ENCODE measurements at regions of chr7 and their contacts with region 1.

Region 1: DNA sequence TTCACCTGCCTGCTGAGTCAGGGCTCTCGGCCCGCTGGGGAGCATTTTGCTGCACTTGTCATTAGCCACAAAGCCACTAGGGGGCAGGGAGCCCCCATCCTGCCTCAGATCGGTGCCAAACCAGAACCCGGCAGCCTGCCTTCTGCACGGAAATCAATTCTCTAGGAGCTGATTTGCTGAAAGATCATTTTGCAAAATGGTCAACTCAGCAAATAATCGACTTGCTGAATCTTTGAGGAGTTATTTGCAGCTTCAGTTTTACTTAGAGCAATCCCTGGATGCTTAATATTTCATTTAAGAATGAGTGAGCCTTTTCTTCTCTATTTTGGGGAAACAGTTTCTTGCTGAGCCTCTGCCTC is 1.7 kb upstream of the GIMAP8 start:
- DNase-seq: peak; percentile 94
- ATAC-seq: peak; percentile 60
- H3K4me3 Mint-ChIP-seq: peak overlapping the region; percentile 32
- H3K27ac Mint-ChIP-seq: peak overlapping the region; percentile 98
- H3K4me1 Mint-ChIP-seq: peaks cover 55% of the 10 kb centered on the region
- H3K27me3 Mint-ChIP-seq: no peaks in the 10 kb centered on the region

Region 2: DNA sequence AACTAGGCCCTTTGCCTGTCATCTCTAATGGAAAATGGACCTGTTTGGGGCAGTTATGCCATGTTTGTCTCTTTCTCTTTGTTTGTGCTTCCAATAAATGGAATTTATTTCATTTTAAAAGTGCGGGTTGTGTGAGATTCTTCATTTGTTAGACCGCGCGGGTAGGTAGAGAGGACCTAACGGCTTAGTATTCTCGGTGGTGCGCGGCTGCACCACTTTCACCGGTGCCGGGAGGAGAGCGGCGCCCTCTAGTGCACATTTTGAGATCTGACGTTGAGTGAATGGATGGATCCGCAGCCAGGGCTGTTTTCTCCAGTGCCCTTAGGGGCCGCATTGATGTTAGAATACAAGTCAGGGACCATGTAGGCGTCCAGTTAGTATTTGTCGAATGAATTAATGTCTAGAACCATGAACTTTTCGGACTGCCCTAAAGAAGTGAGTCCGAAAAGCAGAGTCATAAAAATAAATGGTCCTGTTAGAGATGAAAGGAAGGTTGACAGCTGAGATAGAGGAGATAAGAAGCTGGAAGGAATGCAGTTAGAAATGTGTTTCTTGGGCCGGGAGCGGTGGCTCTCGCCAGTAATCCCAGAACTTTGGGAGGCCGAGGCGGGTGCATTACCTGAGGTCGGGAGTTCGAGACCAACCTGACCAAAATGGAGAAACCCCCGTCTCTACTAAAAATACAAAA is 27.6 kb before region 1 on chr7:
- CTCF ChIA-PET with region 1: no interaction called
- DNase-seq: peak; percentile 90
- ATAC-seq: peak; percentile 100
- H3K4me3 Mint-ChIP-seq: peak overlapping the region; percentile 31
- H3K27ac Mint-ChIP-seq: peak overlapping the region; percentile 50
- H3K4me1 Mint-ChIP-seq: peaks cover 11% of the 10 kb centered on the region
- H3K27me3 Mint-ChIP-seq: peaks cover 2% of the 10 kb centered on the region

Region 3: DNA sequence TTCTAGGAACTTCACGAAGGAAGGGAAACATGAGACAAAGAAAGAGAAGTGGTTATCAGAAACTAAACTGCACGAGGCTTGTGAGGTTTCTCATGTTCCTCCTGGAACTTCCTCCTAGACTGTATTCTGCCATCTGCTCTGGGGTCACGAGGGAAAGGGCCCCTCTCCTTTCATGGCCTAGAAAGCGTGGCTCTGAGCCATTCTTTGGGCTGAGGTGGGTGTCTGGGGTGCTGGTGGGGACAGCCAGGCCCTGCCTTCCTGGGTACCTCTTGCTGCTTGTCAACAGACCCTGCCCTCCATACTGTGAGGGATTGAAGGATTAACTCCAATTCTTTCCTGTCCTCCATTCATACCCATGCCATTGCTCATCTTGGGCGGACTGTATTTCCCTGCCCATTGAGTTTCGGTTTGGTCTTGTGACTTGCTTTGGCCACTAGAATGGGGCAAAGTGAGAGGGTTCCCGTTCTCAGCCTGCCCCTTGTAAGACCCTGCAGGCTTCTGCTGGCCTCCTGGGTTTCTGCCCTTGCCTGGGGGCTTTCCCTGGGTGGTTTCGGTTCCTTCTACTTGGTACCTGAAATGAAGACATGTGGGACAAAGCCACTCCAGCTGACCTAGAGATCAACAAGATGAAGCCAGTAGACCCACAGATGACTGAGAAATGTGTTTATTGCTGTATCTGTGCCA is 13.2 kb before region 1 on chr7:
- CTCF ChIA-PET with region 1: interaction called, 10 read pairs
- DNase-seq: peak; percentile 39
- ATAC-seq: no peak
- H3K4me3 Mint-ChIP-seq: no peak overlapping the region
- H3K27ac Mint-ChIP-seq: peak overlapping the region; percentile 17
- H3K4me1 Mint-ChIP-seq: peaks cover 58% of the 10 kb centered on the region
- H3K27me3 Mint-ChIP-seq: peaks cover 2% of the 10 kb centered on the region

Region 4: GRCh38 chr7:150507947-150508602 is 59.3 kb after region 1 on chr7:
- CTCF ChIA-PET with region 1: interaction called, 19 read pairs
- DNase-seq: no peak
- ATAC-seq: peak; percentile 18
- H3K4me3 Mint-ChIP-seq: peak overlapping the region; percentile 36
- H3K27ac Mint-ChIP-seq: peak overlapping the region; percentile 76
- H3K4me1 Mint-ChIP-seq: peaks cover 85% of the 10 kb centered on the region
- H3K27me3 Mint-ChIP-seq: no peaks in the 10 kb centered on the region

Region 5: GRCh38 chr7:150567169-150567568 is 118.4 kb after region 1 on chr7 and contains the start of gene GIMAP4:
- CTCF ChIA-PET with region 1: interaction called, 52 read pairs
- DNase-seq: peak; percentile 58
- ATAC-seq: peak; percentile 68
- H3K4me3 Mint-ChIP-seq: peak within 1 kb of the TSS; percentile 88
- H3K27ac Mint-ChIP-seq: peak within 1 kb of the TSS; percentile 96
- H3K4me1 Mint-ChIP-seq: peaks cover 70% of the 10 kb centered on the region
- H3K27me3 Mint-ChIP-seq: no peaks in the 10 kb centered on the region
- total RNA-seq, gene GIMAP4: 60.5 to 145 TPM

Region 6: GRCh38 chr7:150631866-150632864 is 183.4 kb after region 1 on chr7 and contains the start of gene GIMAP6:
- CTCF ChIA-PET with region 1: interaction called, 13 read pairs
- DNase-seq: peak; percentile 71
- ATAC-seq: peak; percentile 77
- H3K4me3 Mint-ChIP-seq: peak within 1 kb of the TSS; percentile 97
- H3K27ac Mint-ChIP-seq: peak within 1 kb of the TSS; percentile 91
- H3K4me1 Mint-ChIP-seq: peaks cover 62% of the 10 kb centered on the region
- H3K27me3 Mint-ChIP-seq: no peaks in the 10 kb centered on the region
- total RNA-seq, gene GIMAP6: 54.6 to 65.0 TPM

Region 7: DNA sequence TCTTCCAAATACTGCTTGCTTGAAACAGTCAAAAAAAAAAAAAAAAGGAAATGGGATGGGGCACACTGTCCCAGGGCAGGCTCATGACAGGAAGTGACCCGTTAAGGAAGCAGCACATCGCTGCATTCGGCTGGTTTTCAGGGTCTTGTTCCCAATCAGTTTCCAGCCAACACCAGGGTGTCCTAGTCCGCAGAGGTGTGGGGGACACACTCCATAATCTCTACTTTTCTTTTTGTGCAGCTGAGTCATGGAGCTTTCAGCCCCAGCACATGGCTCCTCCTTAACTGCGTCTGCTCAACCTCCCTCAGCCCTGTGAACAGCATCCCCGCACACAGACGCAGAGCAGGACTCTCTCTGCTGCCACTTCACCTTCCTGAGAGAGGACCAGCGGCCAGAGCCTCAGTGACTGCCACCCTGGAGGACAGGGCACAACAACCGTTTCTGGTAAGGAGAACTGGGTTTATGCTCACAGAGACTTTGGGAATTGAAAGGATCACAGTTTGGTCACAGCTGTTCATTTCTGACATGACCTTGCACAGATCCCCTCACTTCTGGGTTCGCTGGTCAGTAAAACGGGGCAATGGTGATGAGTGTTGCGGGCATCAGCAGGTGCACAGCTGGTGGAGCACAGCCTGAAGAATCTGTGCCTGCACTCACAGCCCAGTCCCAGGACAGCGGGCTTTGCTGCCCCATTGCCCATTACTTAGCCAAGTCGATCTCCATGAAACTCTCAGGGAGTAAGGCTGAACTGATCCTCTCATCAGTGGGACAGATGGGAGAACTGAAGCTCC is 288.7 kb after region 1 on chr7 and contains the start of gene GIMAP5:
- CTCF ChIA-PET with region 1: interaction called, 14 read pairs
- DNase-seq: peak; percentile 79
- ATAC-seq: peak; percentile 65
- H3K4me3 Mint-ChIP-seq: peak within 1 kb of the TSS; percentile 94
- H3K27ac Mint-ChIP-seq: peak within 1 kb of the TSS; percentile 98
- H3K4me1 Mint-ChIP-seq: peaks cover 83% of the 10 kb centered on the region
- H3K27me3 Mint-ChIP-seq: no peaks in the 10 kb centered on the region
- total RNA-seq, gene GIMAP5: 41.0 to 42.5 TPM

Region 8: DNA sequence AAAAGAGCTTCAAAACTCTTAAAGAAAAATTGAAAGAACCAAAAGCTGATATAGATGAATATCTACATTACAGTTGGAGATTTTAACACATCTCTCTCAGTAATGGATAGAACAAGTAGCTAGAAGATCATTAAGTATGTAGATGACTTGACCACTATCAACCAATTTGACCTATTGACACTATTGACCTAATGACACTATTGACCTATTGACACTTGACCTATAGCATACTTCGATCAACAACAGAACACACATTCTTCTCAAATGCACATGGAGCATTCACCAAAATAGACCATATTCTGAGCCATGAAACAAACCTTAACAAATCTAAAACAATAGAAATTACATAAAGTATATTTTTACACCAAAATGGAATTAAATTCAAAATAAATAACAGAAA is 310.7 kb after region 1 on chr7:
- CTCF ChIA-PET with region 1: interaction called, 112 read pairs
- DNase-seq: no peak
- ATAC-seq: no peak
- H3K4me3 Mint-ChIP-seq: no peak overlapping the region
- H3K27ac Mint-ChIP-seq: no peak overlapping the region
- H3K4me1 Mint-ChIP-seq: peaks cover 25% of the 10 kb centered on the region
- H3K27me3 Mint-ChIP-seq: no peaks in the 10 kb centered on the region